ENCODE measurements at regions of chr2 and their contacts with region 1.

Region 1: DNA sequence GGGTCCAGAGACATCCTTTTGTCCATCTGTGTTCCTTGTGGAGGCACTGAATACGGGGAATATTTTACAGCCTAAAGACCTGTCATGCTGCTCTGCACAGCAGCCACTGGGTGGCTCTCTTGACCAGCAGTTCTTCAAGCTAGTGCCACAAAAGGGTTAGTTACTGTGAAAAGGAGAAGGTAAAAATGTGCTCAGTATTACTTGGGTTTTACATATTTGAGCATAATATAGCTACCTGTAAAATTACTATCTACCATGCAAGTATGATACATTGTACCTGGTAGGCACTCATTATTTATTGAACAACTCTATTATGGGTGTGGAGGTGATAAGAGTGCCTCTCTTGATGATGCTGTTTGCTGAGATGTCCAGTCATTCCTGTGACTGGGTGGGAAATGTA is 23.6 kb downstream of the FZD5 start:
- DNase-seq: peak in 9 of 10 donors; percentile 44 to 95 (median 66)

Region 2: DNA sequence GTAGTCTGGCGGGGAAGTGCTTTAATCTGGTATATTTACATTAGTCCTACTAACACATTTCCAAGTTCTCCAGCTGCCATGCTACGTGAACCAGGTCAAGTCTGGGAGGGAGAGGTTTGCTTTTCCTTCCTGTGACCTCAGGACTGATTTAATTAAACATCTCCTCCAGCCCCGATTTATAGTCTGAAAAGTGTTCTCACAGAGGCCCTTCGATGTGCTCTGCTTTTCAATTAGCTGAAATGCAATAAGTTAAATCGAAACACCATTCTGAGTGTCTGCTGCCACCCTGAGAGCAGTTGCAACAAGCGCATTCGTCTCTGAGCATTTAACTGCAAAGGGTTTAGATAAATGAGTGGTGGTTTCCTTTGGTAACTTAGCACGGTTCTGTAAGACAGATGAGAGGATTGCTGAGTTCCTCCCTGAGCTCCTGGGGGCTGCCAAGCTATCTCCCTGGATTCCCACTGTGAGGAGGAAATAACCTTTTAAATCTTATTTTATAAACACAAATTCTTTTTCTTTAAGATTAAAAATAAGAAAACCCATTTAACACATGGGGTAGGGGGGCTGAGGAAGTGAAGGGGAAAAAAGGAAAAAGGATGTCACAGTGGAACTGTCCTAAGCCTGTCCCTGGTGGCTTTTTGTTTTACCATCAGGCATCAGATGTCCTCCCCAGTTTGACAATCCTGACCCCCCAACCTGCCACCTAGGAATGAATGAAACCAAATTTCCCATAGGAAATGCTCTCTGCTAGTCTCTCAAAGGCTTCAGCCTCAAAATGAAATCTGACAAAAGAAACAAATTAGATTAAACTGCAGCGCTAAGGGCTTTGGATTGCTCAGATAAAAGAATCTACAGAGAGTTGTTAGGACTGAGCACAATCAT is 272.8 kb before region 1 on chr2:
- intact Hi-C with region 1: no loop called
- DNase-seq: peak in 8 of 10 donors; percentile 53 to 93 (median 68)

Region 3: GRCh38 chr2:207974216-207974605 is 228.1 kb after region 1 on chr2:
- intact Hi-C with region 1: loop called (anchors 5 kb)
- DNase-seq: no peak

Region 4: GRCh38 chr2:208040199-208041171 is 294.4 kb after region 1 on chr2:
- intact Hi-C with region 1: loop called (anchors 1 kb)
- DNase-seq: peak in 9 of 10 donors; percentile 20 to 88 (median 59)

Region 5: GRCh38 chr2:208072250-208072892 is 326.2 kb after region 1 on chr2:
- intact Hi-C with region 1: loop called (anchors 2 kb)
- DNase-seq: peak; percentile 25 to 93 (median 66)